ENCODE measurements at regions of chr3 and their contacts with region 1.

Region 1: DNA sequence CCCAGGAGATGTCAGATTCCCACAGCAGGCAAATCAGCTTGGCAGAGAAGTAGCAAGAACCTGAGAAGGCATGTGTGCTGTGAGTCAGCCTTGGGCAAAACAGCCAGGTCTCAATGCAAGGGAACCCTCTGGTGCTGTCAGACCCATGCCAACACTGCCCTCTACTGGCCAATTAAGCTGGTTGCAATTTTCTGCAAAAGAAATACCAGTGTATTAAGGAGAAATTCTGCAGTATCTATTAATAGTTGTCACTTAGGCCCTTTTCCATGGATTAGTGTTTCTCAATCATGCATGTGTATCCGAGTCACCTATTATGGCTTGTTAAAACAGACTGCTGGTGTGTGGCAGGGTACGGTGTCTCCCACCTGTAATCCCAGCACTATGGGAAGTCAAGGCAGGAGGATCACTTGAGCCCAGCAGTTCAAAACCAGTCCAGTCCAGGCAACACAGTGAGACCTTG is 26.2 kb downstream of the MAP4 start:
- DNase-seq: peak; percentile 83
- H3K4me3 ChIP-seq: no peak overlapping the region
- H3K27ac ChIP-seq: no peak overlapping the region
- H3K4me1 ChIP-seq: no peaks in the 10 kb centered on the region
- CTCF ChIP-seq: peak; percentile 98

Region 2: GRCh38 chr3:47359323-47359722 is 630.7 kb before region 1 on chr3:
- CTCF ChIA-PET with region 1: no interaction called
- POLR2A ChIA-PET with region 1: no interaction called
- intact Hi-C with region 1: no loop called
- DNase-seq: no peak
- H3K4me3 ChIP-seq: no peak overlapping the region
- H3K27ac ChIP-seq: no peak overlapping the region
- H3K4me1 ChIP-seq: peaks cover 7% of the 10 kb centered on the region
- CTCF ChIP-seq: no peak

Region 3: GRCh38 chr3:47836986-47837385 is 153.0 kb before region 1 on chr3:
- CTCF ChIA-PET with region 1: interaction called, 3 read pairs
- POLR2A ChIA-PET with region 1: no interaction called
- intact Hi-C with region 1: loop called (anchors 1 kb)
- DNase-seq: no peak
- H3K4me3 ChIP-seq: no peak overlapping the region
- H3K27ac ChIP-seq: no peak overlapping the region
- H3K4me1 ChIP-seq: no peaks in the 10 kb centered on the region
- CTCF ChIP-seq: no peak

Region 4: GRCh38 chr3:47849699-47850563 is 140.1 kb before region 1 on chr3:
- CTCF ChIA-PET with region 1: no interaction called
- POLR2A ChIA-PET with region 1: no interaction called
- intact Hi-C with region 1: loop called (anchors 5 kb)
- DNase-seq: peak; percentile 14
- H3K4me3 ChIP-seq: no peak overlapping the region
- H3K27ac ChIP-seq: no peak overlapping the region
- H3K4me1 ChIP-seq: no peaks in the 10 kb centered on the region
- CTCF ChIP-seq: peak; percentile 54

Region 5: GRCh38 chr3:48001991-48002390 is 12.0 kb after region 1 on chr3:
- CTCF ChIA-PET with region 1: no interaction called
- POLR2A ChIA-PET with region 1: no interaction called
- intact Hi-C with region 1: no loop called
- DNase-seq: no peak
- H3K4me3 ChIP-seq: no peak overlapping the region
- H3K27ac ChIP-seq: no peak overlapping the region
- H3K4me1 ChIP-seq: no peaks in the 10 kb centered on the region
- CTCF ChIP-seq: no peak

Measured in OCI-LY7 (cell line).